PC-9 (cell line): ENCODE measurements at regions of chr2 and their contacts with region 1.

Region 1: GRCh38 chr2:146734042-146734820 is 1110.6 kb upstream of the ACVR2A start:
- DNase-seq: no peak
- H3K4me3 ChIP-seq: no peak overlapping the region
- H3K27ac ChIP-seq: no peak overlapping the region
- H3K4me1 ChIP-seq: no peaks in the 10 kb centered on the region
- H3K27me3 ChIP-seq: no peaks in the 10 kb centered on the region
- CTCF ChIP-seq: peak; percentile 72

Region 2: DNA sequence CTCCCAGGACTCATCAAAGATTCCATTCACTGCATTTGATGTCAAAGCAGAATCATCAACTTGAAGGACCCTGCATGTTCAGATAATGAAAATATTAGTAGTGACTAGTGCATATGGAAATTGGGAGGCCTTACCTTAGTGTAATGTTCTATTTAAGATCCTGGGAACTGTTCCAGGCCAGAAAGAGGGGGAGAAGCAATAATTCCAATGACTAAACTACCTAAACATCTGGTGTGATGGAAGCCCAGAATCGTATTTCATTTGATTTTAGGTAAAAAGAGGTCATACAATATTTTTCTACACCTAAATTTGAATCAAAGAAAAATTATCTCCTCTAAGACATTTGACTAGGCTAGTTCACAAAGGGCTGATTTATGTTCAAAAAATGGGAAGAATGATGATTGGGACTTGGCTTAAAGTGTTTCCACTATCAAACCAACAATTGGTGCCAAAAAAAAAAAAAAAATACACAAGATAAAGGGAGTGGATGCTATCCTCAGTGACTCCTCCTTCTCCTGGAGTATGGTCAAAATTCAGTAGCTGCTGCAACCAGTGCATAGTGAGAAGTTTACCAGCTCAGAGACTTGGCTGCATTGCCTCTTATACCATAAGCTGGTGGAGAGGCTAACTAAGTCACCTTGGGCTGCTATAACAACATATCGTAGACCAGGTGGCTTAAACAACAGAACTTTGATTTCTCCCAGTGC is 72.2 kb after region 1 on chr2:
- CTCF ChIA-PET with region 1: no interaction called
- POLR2A ChIA-PET with region 1: no interaction called
- intact Hi-C with region 1: no loop called
- DNase-seq: no peak
- H3K4me3 ChIP-seq: no peak overlapping the region
- H3K27ac ChIP-seq: no peak overlapping the region
- H3K4me1 ChIP-seq: no peaks in the 10 kb centered on the region
- H3K27me3 ChIP-seq: no peaks in the 10 kb centered on the region
- CTCF ChIP-seq: no peak

Region 3: DNA sequence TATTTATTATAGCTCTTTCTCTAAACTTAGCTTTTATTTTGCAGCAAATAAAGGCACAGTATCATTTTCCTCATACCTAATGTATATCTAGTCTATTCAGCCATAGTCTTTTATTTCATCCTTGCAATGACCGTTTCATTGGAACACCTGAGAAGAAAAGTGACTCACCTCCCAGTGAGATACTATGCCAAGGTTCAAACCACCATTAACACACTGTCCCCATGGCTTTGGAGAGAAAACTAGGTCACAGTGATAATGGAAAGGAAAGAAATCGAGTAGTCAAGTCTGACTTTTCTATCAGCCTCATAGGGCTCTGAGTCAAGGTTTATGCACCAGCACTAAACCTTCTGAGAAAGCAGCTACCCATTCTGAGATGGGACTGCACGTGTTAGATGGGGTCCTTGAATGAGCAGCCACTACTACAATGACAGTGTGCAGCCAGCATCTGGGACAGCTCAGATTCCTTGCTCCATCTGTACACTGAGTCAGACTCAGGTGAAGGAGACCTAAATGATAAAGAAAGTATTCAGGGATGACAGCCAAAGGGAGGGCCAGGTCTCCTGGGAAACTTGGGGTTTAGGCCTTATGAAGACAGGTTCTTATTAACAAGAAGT is 139.5 kb after region 1 on chr2:
- CTCF ChIA-PET with region 1: no interaction called
- POLR2A ChIA-PET with region 1: interaction called, 10 read pairs
- intact Hi-C with region 1: no loop called
- DNase-seq: peak in 1 of 2 experiments; percentile 6
- H3K4me3 ChIP-seq: no peak overlapping the region
- H3K27ac ChIP-seq: peak overlapping the region; percentile 29; the same call in 1 of the 2 replicates
- H3K4me1 ChIP-seq: 0 out of 2 replicates have a peak, but pooled peaks cover 8% of the 10 kb centered on the region
- H3K27me3 ChIP-seq: no peaks in the 10 kb centered on the region
- CTCF ChIP-seq: no peak

Region 4: DNA sequence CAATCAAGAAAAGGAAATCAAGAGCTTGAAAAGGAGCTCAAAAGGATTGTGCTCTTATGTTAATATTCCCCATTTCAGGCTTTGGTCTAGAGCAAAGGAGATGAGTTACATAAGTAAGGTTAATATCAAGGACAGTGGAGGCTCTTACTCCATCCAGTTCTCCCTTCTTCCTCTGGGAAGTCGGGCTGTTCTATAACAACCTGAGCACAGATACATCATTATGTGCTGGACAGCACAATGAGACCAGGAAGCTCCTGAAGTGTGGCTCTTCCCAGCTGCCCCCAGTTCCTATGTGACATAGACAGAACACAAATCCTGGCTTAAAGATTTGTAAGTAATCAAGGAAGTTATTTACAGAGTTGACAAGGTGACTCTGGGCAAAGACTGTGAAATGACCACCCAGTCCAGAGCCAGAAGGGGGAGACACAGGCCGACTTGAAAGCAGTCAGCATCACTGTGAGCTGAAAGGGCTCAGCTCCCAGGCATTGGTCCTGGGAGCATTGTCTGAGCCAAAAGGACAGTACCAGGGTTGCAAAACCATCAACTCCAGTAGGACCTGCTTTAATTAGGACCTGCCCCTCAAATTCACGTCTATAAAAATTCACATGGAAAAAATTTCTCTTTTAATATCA is 193.0 kb after region 1 on chr2:
- CTCF ChIA-PET with region 1: no interaction called
- POLR2A ChIA-PET with region 1: no interaction called
- intact Hi-C with region 1: loop called (anchors 1 kb)
- DNase-seq: peak in 1 of 2 experiments; percentile 49
- H3K4me3 ChIP-seq: no peak overlapping the region
- H3K27ac ChIP-seq: no peak overlapping the region
- H3K4me1 ChIP-seq: no peaks in the 10 kb centered on the region
- H3K27me3 ChIP-seq: no peaks in the 10 kb centered on the region
- CTCF ChIP-seq: peak; percentile 61

Region 5: DNA sequence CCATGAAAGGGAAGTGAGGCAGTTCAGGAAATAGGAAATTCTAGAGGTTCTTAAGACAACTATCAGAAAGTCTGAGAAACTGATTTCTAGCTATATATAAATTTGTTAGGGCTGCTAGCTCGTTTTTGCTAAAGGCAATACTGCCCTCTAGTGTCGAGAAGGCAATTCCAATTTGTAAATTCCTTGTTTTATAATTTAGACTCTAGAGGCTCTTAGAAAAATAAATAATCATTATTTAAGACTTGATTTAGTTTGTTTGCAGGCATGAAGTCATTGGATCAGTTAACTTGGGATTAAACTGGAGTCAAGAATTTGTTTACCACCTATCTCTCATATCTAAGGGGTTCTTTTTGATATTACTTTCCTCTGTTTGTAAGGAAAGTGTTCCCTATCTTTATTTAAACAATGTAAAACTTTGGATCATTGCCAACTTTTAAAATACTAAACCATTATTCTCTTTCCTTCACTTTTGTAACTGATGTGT is 1176.8 kb after region 1 on chr2:
- CTCF ChIA-PET with region 1: interaction called, 6 read pairs
- POLR2A ChIA-PET with region 1: no interaction called
- intact Hi-C with region 1: loop called (anchors 1 kb)
- DNase-seq: peak; percentile 15 to 40
- H3K4me3 ChIP-seq: no peak overlapping the region
- H3K27ac ChIP-seq: no peak overlapping the region
- H3K4me1 ChIP-seq: no peaks in the 10 kb centered on the region
- H3K27me3 ChIP-seq: no peaks in the 10 kb centered on the region
- CTCF ChIP-seq: peak; percentile 81